Panc1 (cell line): ENCODE measurements at regions of chr10 and their contacts with region 1.

Region 1: DNA sequence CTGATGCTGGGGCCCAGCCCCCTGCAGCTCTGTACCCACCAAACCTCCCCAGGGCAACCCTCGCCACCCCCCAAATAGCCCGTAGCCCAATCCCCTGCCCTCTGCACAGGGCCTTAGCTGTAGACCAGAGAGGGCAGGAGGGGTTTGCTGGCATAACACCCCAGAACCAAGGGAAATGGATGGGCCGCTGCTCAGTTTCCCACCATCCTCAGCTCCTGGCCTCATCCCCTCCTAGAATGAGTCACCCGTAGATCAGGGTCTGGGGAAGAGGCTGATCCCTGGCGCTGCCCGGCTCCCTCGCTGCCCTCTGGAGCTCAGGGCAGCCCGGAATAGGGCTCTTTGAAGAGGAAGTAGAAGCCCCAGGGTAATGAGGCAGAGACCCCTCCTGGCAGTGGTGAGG is 31.2 kb downstream of the LDB3 start:
- DNase-seq: no peak
- ATAC-seq: no peak
- H3K4me3 ChIP-seq: no peak overlapping the region
- H3K27ac ChIP-seq: no peak overlapping the region
- H3K4me1 ChIP-seq: no peaks in the 10 kb centered on the region
- H3K27me3 ChIP-seq: no peaks in the 10 kb centered on the region
- CTCF ChIP-seq: no peak

Region 2: DNA sequence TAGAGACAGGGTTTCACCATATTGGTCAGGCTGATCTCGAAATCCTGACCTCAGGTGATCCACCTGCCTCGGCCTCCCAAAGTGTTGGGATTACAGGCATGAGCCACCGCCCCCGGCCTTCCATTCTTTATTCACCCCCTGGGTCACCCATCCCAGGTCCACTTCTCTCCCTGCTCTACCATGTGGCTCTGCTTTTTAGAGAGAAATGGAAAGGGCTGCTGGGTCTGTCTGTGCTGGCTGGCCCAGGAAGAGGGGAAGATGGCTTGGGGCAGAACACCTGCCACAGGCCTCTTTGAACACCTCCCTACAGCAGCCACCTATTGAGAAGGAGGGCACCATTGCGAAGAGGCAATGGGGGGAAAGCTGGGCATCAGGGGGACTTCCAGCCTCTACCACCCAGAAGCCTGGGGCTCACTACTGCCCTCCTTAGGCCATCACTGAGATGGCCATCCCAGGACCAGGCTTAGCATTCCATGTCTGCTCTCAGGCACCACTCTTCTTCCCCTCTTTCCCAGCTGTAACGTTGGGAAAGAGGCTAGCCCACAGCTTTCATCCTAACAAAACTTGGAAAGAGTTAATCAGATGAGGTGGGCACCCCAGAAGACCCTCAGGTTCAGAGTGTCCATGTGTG is 589.3 kb before region 1 on chr10:
- CTCF ChIA-PET with region 1: no interaction called
- POLR2A ChIA-PET with region 1: no interaction called
- in situ Hi-C with region 1: no loop called
- intact Hi-C with region 1: no loop called
- DNase-seq: no peak
- ATAC-seq: no peak
- H3K4me3 ChIP-seq: no peak overlapping the region
- H3K27ac ChIP-seq: no peak overlapping the region
- H3K4me1 ChIP-seq: no peaks in the 10 kb centered on the region
- H3K27me3 ChIP-seq: no peaks in the 10 kb centered on the region
- CTCF ChIP-seq: no peak

Region 3: DNA sequence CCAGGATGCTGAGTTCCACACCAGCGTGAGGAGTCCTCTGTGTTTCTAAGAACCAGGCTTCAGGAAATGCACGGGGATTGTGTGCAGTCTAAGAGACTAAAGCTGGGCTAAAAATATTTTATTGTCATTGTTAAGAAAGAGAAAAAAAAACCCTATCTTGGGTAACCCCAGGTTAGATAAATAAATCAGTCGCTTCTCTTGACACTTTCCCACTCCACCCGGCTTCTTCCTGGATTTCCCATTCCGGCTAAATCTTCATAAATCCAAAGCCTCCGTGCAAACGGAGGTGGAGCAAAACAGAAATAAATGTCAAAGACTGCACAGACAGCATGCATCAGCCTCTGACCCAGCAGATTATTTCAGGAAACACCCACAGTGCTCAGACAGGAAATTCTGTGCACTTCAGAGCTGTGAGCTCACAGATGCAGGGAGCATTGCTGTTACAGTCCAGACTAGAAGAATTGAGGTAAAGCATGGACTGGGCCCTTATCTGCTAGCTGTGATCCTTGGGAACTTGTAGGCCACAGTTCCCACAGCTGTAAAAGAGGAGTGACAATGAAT is 288.2 kb before region 1 on chr10:
- CTCF ChIA-PET with region 1: interaction called, 17 read pairs
- POLR2A ChIA-PET with region 1: no interaction called
- in situ Hi-C with region 1: no loop called
- intact Hi-C with region 1: no loop called
- DNase-seq: no peak
- ATAC-seq: no peak
- H3K4me3 ChIP-seq: no peak overlapping the region
- H3K27ac ChIP-seq: no peak overlapping the region
- H3K4me1 ChIP-seq: no peaks in the 10 kb centered on the region
- H3K27me3 ChIP-seq: no peaks in the 10 kb centered on the region
- CTCF ChIP-seq: no peak

Region 4: DNA sequence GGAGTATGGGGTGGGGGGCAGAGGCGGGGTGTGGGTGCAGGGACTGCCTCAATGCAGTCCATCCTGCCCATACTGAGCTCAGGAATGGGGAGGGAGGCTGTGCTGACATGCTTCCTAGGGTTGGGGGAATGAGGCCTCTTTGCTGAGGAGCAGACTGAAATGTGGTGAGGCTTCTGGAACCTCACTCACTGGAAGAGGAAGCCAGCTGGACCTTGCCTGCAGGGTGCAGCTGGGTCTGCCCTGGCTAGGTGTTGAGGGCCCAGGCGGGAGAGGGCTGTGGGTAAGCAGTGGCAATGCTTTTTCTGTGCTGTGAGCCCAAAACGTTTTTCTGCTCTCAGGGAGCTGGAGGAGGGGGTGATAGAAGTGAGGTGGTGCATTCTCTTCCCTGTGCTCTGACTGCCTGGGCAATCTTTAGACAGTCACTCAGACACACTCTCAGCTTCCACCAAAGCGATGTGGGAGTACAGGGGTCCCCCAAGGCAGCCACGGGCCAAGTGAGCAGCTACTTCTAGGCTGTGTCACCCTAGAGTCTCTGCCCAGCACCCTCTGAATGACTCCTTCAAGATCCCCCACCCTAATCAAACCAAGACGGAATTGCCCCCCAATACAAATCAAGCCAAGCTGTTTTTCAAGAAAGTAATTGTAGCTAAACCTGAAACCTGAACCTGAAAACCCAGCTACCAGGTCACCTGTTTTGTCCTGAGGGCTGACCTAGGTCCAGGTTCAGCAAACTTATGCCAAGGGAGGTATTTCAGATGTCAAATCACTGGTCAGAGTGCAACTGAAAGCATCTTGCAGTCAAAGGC is 15.8 kb after region 1 on chr10:
- CTCF ChIA-PET with region 1: no interaction called
- POLR2A ChIA-PET with region 1: no interaction called
- in situ Hi-C with region 1: no loop called
- intact Hi-C with region 1: no loop called
- DNase-seq: no peak
- ATAC-seq: no peak
- H3K4me3 ChIP-seq: no peak overlapping the region
- H3K27ac ChIP-seq: no peak overlapping the region
- H3K4me1 ChIP-seq: peaks cover 8% of the 10 kb centered on the region; the same call in 1 of the 2 replicates
- H3K27me3 ChIP-seq: no peaks in the 10 kb centered on the region
- CTCF ChIP-seq: no peak

Region 5: GRCh38 chr10:87605628-87606308 is 906.2 kb after region 1 on chr10:
- CTCF ChIA-PET with region 1: no interaction called
- POLR2A ChIA-PET with region 1: no interaction called
- in situ Hi-C with region 1: no loop called
- intact Hi-C with region 1: no loop called
- DNase-seq: no peak
- ATAC-seq: no peak
- H3K4me3 ChIP-seq: no peak overlapping the region
- H3K27ac ChIP-seq: no peak overlapping the region
- H3K4me1 ChIP-seq: no peaks in the 10 kb centered on the region; the same call in 1 of the 2 replicates
- H3K27me3 ChIP-seq: no peaks in the 10 kb centered on the region
- CTCF ChIP-seq: no peak